Mammary epithelial cell (primary cell): ENCODE measurements at regions of chr12 and their contacts with region 1.

Region 1: DNA sequence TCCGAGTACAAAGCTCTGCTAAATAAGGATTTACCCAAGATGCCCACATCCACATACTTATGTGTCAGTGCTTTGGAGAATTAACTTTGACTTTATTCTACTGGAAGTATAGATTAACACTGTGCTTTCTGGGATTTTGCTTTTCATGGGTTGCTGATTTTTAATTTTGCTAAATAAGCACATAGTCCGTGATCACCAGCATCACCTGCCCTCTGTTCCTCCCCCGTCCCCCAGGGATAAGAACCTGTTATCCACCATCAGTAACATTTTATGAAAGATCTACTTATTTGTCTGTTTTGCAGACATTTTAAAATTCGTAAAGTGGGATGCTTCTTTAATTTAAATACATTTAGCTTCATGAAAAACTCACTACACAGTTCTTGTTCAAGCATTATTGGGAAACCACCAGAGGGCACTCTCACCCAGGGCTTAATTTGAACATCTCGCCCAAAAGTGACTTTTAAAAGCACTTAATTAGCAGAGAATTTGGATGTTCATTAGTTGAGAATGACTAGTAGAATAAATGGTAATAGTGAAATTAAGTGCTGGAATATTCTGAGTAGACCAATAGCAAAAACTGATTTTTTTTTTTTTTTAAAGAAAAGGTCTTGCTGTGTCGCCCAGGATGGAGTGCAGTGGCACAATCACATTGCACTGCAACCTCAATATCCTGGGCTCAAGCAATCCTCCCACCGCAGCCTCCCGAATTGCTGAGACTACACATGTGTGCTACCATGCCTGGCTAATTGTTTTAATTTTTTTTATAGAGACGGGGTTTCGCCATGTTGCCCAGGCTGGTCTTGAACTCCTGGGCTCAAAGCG is 35.7 kb downstream of the MRPL42 start:
- DNase-seq: peak; percentile 9
- H3K4me3 ChIP-seq: no peak overlapping the region
- H3K27ac ChIP-seq: no peak overlapping the region
- H3K4me1 ChIP-seq: no peaks in the 10 kb centered on the region
- H3K27me3 ChIP-seq: no peaks in the 10 kb centered on the region
- CTCF ChIP-seq: peak; percentile 74 to 75

Region 2: GRCh38 chr12:92987362-92987761 is 515.7 kb before region 1 on chr12:
- CTCF ChIA-PET with region 1: interaction called, 3 read pairs
- dilution Hi-C with region 1: no loop called
- in situ Hi-C with region 1: no loop called
- intact Hi-C with region 1: loop called (anchors 10 kb)
- DNase-seq: peak; percentile 58
- H3K4me3 ChIP-seq: no peak overlapping the region
- H3K27ac ChIP-seq: no peak overlapping the region
- H3K4me1 ChIP-seq: peaks cover 5% of the 10 kb centered on the region
- H3K27me3 ChIP-seq: no peaks in the 10 kb centered on the region
- CTCF ChIP-seq: peak; percentile 45 to 53

Region 3: DNA sequence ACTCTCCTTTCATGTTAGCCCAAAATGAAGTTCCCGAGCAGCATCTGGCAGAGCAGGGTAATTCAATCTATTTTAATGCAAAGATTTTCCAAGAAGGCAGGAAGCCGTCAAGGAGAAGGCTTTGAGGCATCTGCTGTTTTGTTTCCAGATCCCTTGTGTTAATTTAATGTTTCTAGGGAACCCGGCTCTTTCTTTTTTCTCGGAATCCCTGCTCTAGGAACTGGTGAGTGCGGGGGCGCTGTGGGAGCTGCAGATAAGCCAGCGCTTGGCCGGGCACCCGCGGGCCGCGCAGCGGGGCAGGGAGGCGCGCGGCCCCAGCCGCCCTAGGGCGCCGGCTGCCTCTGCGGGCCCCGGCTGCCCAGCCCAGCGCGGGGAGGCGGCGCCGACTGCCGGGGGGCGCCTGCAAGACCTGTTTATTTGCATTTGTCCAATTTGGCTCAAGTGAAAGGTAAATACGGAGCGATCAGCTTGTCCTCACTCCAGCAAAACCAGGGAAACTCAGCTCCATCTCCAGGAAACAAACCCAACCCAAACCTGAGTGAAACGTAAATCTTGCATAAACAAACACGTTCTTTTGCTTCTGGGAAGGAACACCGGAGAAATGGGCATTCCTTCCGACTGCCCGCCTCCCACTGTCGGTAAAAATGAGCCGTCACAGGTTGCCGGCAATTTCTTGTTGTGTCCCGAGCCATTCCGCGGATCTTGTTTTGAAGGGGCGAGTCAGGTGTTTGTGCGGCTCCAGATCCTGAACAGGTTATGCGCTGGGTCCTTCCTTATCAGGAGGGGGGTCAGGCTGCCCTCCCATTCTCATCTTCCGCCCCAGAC is 239.3 kb after region 1 on chr12:
- CTCF ChIA-PET with region 1: interaction called, 3 read pairs
- dilution Hi-C with region 1: no loop called
- in situ Hi-C with region 1: no loop called
- intact Hi-C with region 1: loop called (anchors 2 kb)
- DNase-seq: peak; percentile 65
- H3K4me3 ChIP-seq: peak overlapping the region; percentile 55 to 74 (median 60)
- H3K27ac ChIP-seq: peak overlapping the region; percentile 81
- H3K4me1 ChIP-seq: peaks cover 16% of the 10 kb centered on the region
- H3K27me3 ChIP-seq: no peaks in the 10 kb centered on the region
- CTCF ChIP-seq: peak; percentile 12 to 48

Region 4: GRCh38 chr12:93979189-93979588 is 476.2 kb after region 1 on chr12:
- CTCF ChIA-PET with region 1: no interaction called
- dilution Hi-C with region 1: no loop called
- in situ Hi-C with region 1: no loop called
- intact Hi-C with region 1: loop called (anchors 2 kb)
- DNase-seq: peak; percentile 24
- H3K4me3 ChIP-seq: no peak overlapping the region
- H3K27ac ChIP-seq: no peak overlapping the region
- H3K4me1 ChIP-seq: peaks cover 5% of the 10 kb centered on the region
- H3K27me3 ChIP-seq: no peaks in the 10 kb centered on the region
- CTCF ChIP-seq: peak; percentile 27 to 50